CD4-positive, alpha-beta memory T cell (primary cell): ENCODE measurements at regions of chr12 and their contacts with region 1.

Region 1: GRCh38 chr12:24852420-24852819 is 96.5 kb downstream of the BCAT1 start:
- DNase-seq: no peak
- H3K4me3 ChIP-seq: no peak overlapping the region
- H3K4me3 Mint-ChIP-seq: no peak overlapping the region
- H3K27ac ChIP-seq: no peak overlapping the region
- H3K27ac Mint-ChIP-seq: no peak overlapping the region
- H3K4me1 ChIP-seq: no peaks in the 10 kb centered on the region
- H3K4me1 Mint-ChIP-seq: no peaks in the 10 kb centered on the region
- H3K27me3 ChIP-seq: no peaks in the 10 kb centered on the region
- H3K27me3 Mint-ChIP-seq: peaks cover 1 to 4% of the 10 kb centered on the region in 2 donors

Region 2: GRCh38 chr12:24133384-24133783 is 719.0 kb before region 1 on chr12:
- CTCF ChIA-PET with region 1: no interaction called
- POLR2A ChIA-PET with region 1: no interaction called
- intact Hi-C with region 1: no loop called
- DNase-seq: no peak
- H3K4me3 ChIP-seq: no peak overlapping the region
- H3K4me3 Mint-ChIP-seq: no peak overlapping the region
- H3K27ac ChIP-seq: no peak overlapping the region
- H3K27ac Mint-ChIP-seq: no peak overlapping the region
- H3K4me1 ChIP-seq: no peaks in the 10 kb centered on the region
- H3K4me1 Mint-ChIP-seq: no peaks in the 10 kb centered on the region
- H3K27me3 ChIP-seq: no peaks in the 10 kb centered on the region
- H3K27me3 Mint-ChIP-seq: no peaks in the 10 kb centered on the region

Region 3: GRCh38 chr12:24810378-24810777 is 42.0 kb before region 1 on chr12:
- CTCF ChIA-PET with region 1: no interaction called
- POLR2A ChIA-PET with region 1: no interaction called
- intact Hi-C with region 1: no loop called
- DNase-seq: no peak
- H3K4me3 ChIP-seq: no peak overlapping the region
- H3K4me3 Mint-ChIP-seq: no peak overlapping the region
- H3K27ac ChIP-seq: no peak overlapping the region
- H3K27ac Mint-ChIP-seq: no peak overlapping the region
- H3K4me1 ChIP-seq: peaks cover 14% of the 10 kb centered on the region
- H3K4me1 Mint-ChIP-seq: peaks cover 11 to 21% (median 15%) of the 10 kb centered on the region in 4 donors
- H3K27me3 ChIP-seq: no peaks in the 10 kb centered on the region
- H3K27me3 Mint-ChIP-seq: no peaks in the 10 kb centered on the region

Region 4: GRCh38 chr12:25130741-25131188 is 278.3 kb after region 1 on chr12:
- CTCF ChIA-PET with region 1: interaction called, 4 read pairs
- POLR2A ChIA-PET with region 1: no interaction called
- intact Hi-C with region 1: loop called (anchors 2 kb)
- DNase-seq: peak in 4 of 5 donors; percentile 33 to 53 (median 46)
- H3K4me3 ChIP-seq: no peak overlapping the region
- H3K4me3 Mint-ChIP-seq: no peak overlapping the region
- H3K27ac ChIP-seq: no peak overlapping the region
- H3K27ac Mint-ChIP-seq: no peak overlapping the region
- H3K4me1 ChIP-seq: no peaks in the 10 kb centered on the region
- H3K4me1 Mint-ChIP-seq: no peaks in the 10 kb centered on the region
- H3K27me3 ChIP-seq: no peaks in the 10 kb centered on the region
- H3K27me3 Mint-ChIP-seq: peaks cover 2 to 3% of the 10 kb centered on the region in 2 donors